ENCODE measurements at regions of chr7 and their contacts with region 1.

Region 1: GRCh38 chr7:131190146-131190545 is 137.5 kb upstream of the MKLN1 start:
- DNase-seq: peak; percentile 34 to 55
- ATAC-seq: no peak
- H3K4me3 ChIP-seq: no peak overlapping the region
- H3K27ac ChIP-seq: peak overlapping the region; percentile 82 to 95 (median 88)
- H3K4me1 ChIP-seq: peaks cover 18 to 57% of the 10 kb centered on the region in 2 donors
- H3K27me3 ChIP-seq: no peaks in the 10 kb centered on the region
- CTCF ChIP-seq: no peak
- POLR2A ChIP-seq: no peak

Region 2: GRCh38 chr7:130084037-130084875 is 1105.9 kb before region 1 on chr7:
- in situ Hi-C with region 1: no loop called
- intact Hi-C with region 1: no loop called
- DNase-seq: peak in 1 of 2 donors; percentile 19
- ATAC-seq: peak in 1 of 2 donors; percentile 33
- H3K4me3 ChIP-seq: no peak overlapping the region
- H3K27ac ChIP-seq: no peak overlapping the region
- H3K4me1 ChIP-seq: no peaks in the 10 kb centered on the region
- H3K27me3 ChIP-seq: no peaks in the 10 kb centered on the region
- CTCF ChIP-seq: no peak
- POLR2A ChIP-seq: no peak

Region 3: DNA sequence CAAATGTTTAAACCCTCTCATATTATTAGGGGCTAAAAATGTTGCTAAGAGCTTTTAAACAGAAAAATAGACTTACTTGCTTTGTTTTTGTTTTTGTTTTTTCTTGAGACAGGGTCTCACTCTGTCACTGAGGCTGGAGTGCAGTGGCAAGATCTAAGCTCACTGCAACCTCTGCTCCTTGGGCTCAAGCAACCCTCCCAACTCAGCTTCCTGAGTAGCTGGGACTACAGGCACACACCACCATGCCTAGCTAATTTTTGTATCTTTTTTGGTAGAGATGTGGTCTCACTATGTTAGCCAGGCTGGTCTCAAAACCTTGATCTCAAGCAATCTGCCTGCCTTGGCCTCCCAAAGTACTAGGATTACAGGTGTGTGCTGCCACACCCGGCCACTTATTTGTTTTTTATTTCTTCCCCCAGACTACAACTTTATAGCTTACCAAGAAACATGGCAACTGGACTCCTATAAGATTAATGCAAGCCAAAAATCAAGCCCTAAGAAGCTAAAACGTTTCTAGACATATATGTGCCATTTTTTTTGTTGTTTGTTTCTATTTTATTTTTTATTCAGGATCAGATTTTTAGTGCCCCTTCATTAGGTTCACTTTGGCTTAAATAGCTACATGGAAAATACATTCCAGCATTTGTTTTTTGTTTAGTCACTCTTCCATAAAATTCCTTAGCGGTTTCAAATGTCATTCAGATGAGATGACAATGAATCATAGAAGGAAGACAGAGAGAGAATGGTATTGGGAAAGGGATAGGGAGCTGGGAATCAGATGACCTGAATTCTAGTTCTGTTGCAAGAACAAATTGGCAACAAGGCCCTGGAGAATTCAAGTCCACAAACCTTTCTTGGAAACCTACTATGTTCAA is 25.9 kb before region 1 on chr7:
- in situ Hi-C with region 1: no loop called
- intact Hi-C with region 1: loop called (anchors 2 kb)
- DNase-seq: peak; percentile 43 to 53
- ATAC-seq: peak; percentile 98 to 99
- H3K4me3 ChIP-seq: no peak overlapping the region
- H3K27ac ChIP-seq: peak overlapping the region; percentile 80 to 91 (median 85)
- H3K4me1 ChIP-seq: peaks cover 17 to 32% of the 10 kb centered on the region in 2 donors
- H3K27me3 ChIP-seq: no peaks in the 10 kb centered on the region
- CTCF ChIP-seq: no peak
- POLR2A ChIP-seq: no peak

Region 4: DNA sequence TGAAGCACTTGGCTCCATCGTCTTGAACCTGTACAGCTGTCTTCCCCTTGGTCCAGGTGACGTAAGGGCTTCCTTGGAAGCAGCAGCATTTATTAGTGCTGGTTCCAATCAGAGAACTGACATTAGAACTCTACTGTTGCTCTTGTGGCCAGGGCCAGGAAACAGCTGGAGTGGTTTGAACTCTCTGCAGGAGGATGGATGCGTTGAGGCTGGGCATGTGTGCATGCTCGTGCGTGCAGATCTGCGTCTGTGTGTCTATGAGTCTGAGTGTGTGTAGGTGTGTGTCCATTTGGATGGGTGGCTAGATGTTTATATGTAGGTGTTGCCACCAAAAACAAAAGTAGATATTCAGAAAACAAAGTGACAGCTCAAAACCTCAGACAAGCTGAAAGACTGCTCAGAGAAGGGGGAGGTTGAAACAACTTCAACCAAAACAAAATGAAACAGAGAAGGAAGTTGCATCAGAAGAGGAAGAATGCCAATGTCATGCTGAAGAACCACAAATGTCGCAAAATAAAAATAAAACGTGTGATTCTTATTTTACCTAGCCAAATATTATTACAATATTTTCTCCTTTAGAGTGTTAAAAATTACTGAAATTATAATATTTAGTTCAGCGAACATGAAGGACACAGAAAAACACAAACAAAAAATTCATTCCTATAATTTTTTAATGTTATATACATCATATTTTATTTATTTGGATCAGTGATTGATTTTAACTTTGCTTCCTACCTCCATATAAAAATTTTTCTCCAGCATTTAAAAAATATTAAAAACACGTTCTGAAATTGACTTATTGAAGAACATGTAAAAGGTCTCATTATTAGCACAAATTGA is 41.5 kb after region 1 on chr7:
- in situ Hi-C with region 1: no loop called
- intact Hi-C with region 1: loop called (anchors 5 kb)
- DNase-seq: peak in 1 of 2 donors; percentile 21
- ATAC-seq: peak; percentile 47 to 52
- H3K4me3 ChIP-seq: no peak overlapping the region
- H3K27ac ChIP-seq: peak overlapping the region; percentile 9 to 19 (median 16)
- H3K4me1 ChIP-seq: peaks cover 12 to 15% of the 10 kb centered on the region in 2 donors
- H3K27me3 ChIP-seq: no peaks in the 10 kb centered on the region
- CTCF ChIP-seq: no peak
- POLR2A ChIP-seq: no peak

Region 5: DNA sequence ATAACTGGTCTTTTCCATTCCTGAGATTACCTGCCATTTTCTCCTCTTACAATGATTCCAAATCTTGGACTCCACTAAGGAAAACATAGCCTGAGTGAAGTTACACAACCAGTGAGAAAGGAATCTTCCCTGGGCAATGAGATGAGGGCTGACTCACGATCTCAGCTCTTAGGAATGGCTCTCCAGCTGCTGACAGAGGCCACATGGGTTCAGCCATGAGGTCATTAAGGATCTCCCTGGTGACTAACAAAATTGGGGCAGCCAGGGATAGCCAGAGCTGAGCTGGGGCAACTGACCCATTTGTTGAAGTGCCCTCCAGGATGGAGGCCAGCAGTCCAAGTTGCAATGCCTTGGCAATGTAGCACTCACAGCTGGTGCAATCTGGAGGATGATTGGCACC is 58.9 kb after region 1 on chr7:
- in situ Hi-C with region 1: no loop called
- intact Hi-C with region 1: loop called (anchors 1 kb)
- DNase-seq: peak; percentile 95 to 97
- ATAC-seq: peak; percentile 91 to 99
- H3K4me3 ChIP-seq: no peak overlapping the region
- H3K27ac ChIP-seq: peak overlapping the region; percentile 66 to 87 (median 72)
- H3K4me1 ChIP-seq: peaks cover 17 to 33% of the 10 kb centered on the region in 2 donors
- H3K27me3 ChIP-seq: no peaks in the 10 kb centered on the region
- CTCF ChIP-seq: no peak
- POLR2A ChIP-seq: peak in 1 of 2 donors; percentile 24

Region 6: DNA sequence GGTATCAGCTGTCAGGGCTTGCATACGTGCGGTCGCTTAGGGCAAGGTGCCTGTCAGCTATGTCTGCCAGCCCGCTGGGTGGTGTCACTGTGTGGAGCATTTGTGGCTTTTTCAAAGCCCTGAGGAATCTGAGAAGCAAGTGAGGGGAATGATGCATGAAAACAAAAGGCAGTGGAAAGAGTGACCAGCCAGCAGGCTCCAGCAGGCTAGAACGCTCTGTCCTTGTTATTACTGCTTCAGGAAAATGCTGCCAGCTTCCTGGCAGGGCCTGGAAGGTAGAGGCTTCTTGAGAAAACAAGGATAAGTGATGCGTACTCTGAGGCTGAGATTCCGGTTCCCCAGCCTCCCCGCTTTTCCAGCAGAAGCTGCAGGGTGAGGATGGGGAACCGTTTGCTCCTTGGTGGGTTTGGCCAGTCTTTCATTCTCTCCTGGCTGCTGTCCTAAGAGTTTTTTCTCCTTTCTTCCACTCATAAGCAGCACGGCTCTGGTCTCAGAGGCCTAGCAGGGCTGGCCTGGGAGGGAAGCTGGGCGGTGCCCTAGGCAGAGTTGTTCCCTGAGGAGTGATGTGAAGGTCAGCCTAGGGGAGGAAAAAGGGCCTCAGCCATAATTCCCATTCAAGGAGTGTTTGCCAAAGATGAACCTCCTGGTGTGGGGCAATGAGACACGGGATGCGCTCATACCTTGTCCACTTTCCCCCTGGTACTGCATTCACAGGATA is 94.7 kb after region 1 on chr7:
- in situ Hi-C with region 1: no loop called
- intact Hi-C with region 1: loop called (anchors 1 kb)
- DNase-seq: peak; percentile 90 to 93
- ATAC-seq: peak; percentile 92 to 94
- H3K4me3 ChIP-seq: peak overlapping the region in 1 of 4 donors; percentile 25
- H3K27ac ChIP-seq: peak overlapping the region; percentile 83 to 97 (median 92)
- H3K4me1 ChIP-seq: peaks cover 23 to 41% of the 10 kb centered on the region in 2 donors
- H3K27me3 ChIP-seq: no peaks in the 10 kb centered on the region
- CTCF ChIP-seq: peak in 1 of 5 experiments; percentile 8
- POLR2A ChIP-seq: no peak